Aorta (tissue), 5 donors: ENCODE measurements at regions of chr12 and their contacts with region 1.

Region 1: GRCh38 chr12:110600254-110600653 is 13.7 kb upstream of the TCTN1 start:
- DNase-seq: no peak
- ATAC-seq: peak; percentile 75
- H3K4me3 ChIP-seq: no peak overlapping the region
- H3K27ac ChIP-seq: no peak overlapping the region
- H3K4me1 ChIP-seq: no peaks in the 10 kb centered on the region
- H3K27me3 ChIP-seq: no peaks in the 10 kb centered on the region

Region 2: DNA sequence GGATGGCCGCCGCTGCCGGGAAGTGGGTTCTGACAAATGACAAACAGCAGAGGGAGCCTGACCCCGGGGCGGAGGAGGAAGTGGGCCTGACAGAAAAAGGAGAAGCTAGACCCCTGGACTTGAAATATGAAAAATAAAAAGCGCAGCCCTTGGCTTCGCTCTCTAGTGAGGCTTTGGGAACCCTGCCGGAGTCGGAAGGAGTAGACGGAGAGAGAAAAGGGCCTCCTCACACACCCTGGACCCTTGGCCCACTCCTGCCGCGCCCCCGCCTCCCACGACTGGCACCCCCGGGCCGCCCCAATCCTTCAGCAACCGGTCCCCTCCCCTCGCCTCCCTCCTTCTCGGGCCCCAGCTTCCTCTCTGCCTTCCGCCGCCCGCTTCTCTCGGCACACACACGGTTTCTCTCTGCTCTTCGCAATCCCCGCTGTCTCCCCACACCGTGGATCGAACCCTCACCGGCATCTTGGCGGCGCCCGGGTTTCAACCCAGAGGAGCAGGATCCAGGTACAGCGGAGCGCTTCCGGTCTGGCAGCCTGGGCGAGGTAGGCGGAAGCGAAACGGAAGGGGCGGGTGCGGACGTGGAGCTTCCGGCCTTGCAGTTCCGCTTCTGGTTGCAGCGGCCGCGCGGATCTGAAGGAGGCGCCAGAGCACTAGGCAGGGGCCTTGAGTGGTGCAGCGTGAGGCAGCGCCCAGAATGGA is 150.3 kb before region 1 on chr12 and contains the start of gene ARPC3:
- intact Hi-C with region 1: loop called (anchors 1 to 5 kb)
- DNase-seq: peak; percentile 97 to 98
- ATAC-seq: peak; percentile 100
- H3K4me3 ChIP-seq: peak within 1 kb of the TSS; percentile 45 to 95
- H3K27ac ChIP-seq: peak within 1 kb of the TSS; percentile 33 to 76
- H3K4me1 ChIP-seq: no peaks in the 10 kb centered on the region
- H3K27me3 ChIP-seq: no peaks in the 10 kb centered on the region
- total RNA-seq, gene ARPC3: 154 to 155 TPM

Region 3: GRCh38 chr12:110468212-110469048 is 131.8 kb before region 1 on chr12 and contains the starts of genes FAM216A and GPN3:
- intact Hi-C with region 1: loop called (anchors 5 kb)
- DNase-seq: peak; percentile 97 to 98
- ATAC-seq: peak; percentile 96
- H3K4me3 ChIP-seq: peak within 1 kb of the TSS; percentile 66 to 86
- H3K27ac ChIP-seq: peak within 1 kb of the TSS; percentile 5 to 68
- H3K4me1 ChIP-seq: no peaks in the 10 kb centered on the region
- H3K27me3 ChIP-seq: no peaks in the 10 kb centered on the region
- total RNA-seq, gene FAM216A: 6.6 to 7.1 TPM
- total RNA-seq, gene GPN3: 14.5 to 20.6 TPM

Region 4: DNA sequence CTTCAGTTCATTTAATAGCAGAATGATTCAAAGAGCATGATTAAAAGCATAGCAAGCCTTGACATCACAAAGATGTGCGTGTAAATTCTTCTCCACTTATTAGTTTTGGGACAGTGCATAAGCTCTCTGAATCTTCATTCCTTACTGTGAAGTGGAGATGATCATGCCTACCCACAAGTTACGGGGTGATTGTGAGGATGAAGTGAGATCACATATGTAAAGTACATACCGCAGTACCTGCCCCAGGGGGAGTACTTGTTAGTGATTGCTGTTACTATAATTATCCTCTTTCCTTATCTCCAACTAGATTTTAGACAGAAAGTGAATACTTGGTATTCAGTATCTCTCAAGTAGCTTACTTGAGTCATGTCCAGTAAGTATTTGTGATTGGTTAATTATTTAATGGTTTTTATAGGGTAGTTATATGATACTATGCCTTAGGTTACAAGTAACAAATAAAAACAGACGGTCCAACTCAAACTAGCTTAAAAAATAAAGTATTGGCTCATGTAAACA is 92.1 kb before region 1 on chr12:
- intact Hi-C with region 1: loop called (anchors 1 to 5 kb)
- DNase-seq: no peak
- ATAC-seq: no peak
- H3K4me3 ChIP-seq: no peak overlapping the region
- H3K27ac ChIP-seq: no peak overlapping the region
- H3K4me1 ChIP-seq: no peaks in the 10 kb centered on the region
- H3K27me3 ChIP-seq: no peaks in the 10 kb centered on the region

Region 5: DNA sequence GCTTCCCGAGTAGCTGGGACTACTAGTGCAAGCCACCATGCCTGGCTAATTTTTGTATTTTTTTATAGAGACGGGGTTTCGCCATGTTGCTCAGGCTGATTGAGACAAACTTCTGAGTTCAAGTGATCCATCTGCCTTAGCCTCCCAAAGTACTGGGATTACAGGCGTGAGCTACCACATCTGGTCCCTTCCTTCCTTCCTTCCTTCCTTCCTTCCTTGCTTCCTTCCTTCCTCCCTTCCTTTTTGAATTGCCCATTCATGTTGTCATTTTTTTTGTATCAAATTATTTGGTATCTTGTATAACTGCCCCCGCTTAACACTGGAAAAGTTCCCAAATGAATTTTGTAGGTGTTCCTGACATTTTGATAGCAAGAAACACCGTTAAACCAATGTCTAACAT is 86.4 kb before region 1 on chr12:
- intact Hi-C with region 1: loop called (anchors 1 to 5 kb)
- DNase-seq: no peak
- ATAC-seq: no peak
- H3K4me3 ChIP-seq: no peak overlapping the region
- H3K27ac ChIP-seq: no peak overlapping the region
- H3K4me1 ChIP-seq: no peaks in the 10 kb centered on the region
- H3K27me3 ChIP-seq: no peaks in the 10 kb centered on the region

Region 6: GRCh38 chr12:110531741-110532333 is 68.4 kb before region 1 on chr12:
- intact Hi-C with region 1: no loop called
- DNase-seq: no peak
- ATAC-seq: no peak
- H3K4me3 ChIP-seq: no peak overlapping the region
- H3K27ac ChIP-seq: no peak overlapping the region
- H3K4me1 ChIP-seq: peaks cover under 1 to 6% of the 10 kb centered on the region in 2 donors
- H3K27me3 ChIP-seq: no peaks in the 10 kb centered on the region

Region 7: GRCh38 chr12:110708917-110709316 is 108.7 kb after region 1 on chr12:
- intact Hi-C with region 1: no loop called
- DNase-seq: no peak
- ATAC-seq: no peak
- H3K4me3 ChIP-seq: no peak overlapping the region
- H3K27ac ChIP-seq: no peak overlapping the region
- H3K4me1 ChIP-seq: no peaks in the 10 kb centered on the region
- H3K27me3 ChIP-seq: no peaks in the 10 kb centered on the region